ENCODE measurements at regions of chr6 and their contacts with region 1.

Region 1: GRCh38 chr6:31139599-31139998 is 733 bp upstream of the PSORS1C2 start:
- DNase-seq: no peak
- H3K4me3 Mint-ChIP-seq: no peak overlapping the region
- H3K27ac Mint-ChIP-seq: no peak overlapping the region
- H3K4me1 Mint-ChIP-seq: peaks cover 3% of the 10 kb centered on the region
- H3K27me3 Mint-ChIP-seq: no peaks in the 10 kb centered on the region

Region 2: DNA sequence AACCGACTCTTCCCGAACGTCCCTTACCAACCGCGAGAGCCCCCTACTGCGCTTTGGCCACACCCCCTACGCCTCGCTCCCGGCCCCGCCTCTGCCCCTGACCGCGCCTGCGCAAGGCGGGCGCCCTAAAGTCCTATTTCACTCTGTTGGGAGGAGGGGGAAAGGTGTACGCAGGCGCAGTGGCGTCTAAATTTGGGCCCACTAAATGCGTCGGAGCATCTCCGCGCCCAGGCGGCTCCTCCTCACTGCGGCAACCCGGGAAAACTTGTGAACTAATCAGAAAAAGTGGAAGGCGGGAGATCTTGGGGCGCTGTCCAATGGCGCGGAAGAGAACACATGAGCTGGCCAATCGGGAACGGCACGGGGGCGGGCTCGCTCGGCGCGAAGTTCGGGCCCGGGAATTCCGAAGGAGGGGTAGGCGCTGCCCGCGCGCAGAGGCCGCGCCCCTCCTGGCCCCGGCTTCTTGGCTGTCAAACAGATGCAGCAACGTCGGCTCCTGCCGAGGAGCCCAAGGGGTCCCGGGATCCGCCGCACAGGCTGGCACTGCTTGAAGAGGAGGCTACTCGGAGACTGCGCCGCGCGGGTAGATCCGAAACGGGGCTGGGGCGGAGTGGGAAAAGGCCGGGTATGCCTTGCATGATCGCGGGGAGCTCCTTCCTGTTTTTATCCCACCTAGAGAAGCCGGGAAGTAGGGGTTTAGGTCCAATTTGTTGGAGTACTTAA is 18.7 kb after region 1 on chr6 and contains the start of gene TCF19:
- CTCF ChIA-PET with region 1: interaction called, 5 read pairs
- POLR2A ChIA-PET with region 1: interaction called, 4 read pairs
- intact Hi-C with region 1: loop called (anchors 2 kb)
- DNase-seq: peak; percentile 100
- H3K4me3 Mint-ChIP-seq: peak within 1 kb of the TSS; percentile 92
- H3K27ac Mint-ChIP-seq: peak within 1 kb of the TSS; percentile 73
- H3K4me1 Mint-ChIP-seq: peaks cover 29% of the 10 kb centered on the region
- H3K27me3 Mint-ChIP-seq: peaks cover 2% of the 10 kb centered on the region
- total RNA-seq, gene TCF19: 93.0 to 93.1 TPM

Measured in activated CD4-positive, alpha-beta memory T cell treated with anti-CD3 and anti-CD28 coated beads for 36 hours (primary cell).